Heart left ventricle (tissue), 16 donors: ENCODE measurements at regions of chr1 and their contacts with region 1.

Region 1: DNA sequence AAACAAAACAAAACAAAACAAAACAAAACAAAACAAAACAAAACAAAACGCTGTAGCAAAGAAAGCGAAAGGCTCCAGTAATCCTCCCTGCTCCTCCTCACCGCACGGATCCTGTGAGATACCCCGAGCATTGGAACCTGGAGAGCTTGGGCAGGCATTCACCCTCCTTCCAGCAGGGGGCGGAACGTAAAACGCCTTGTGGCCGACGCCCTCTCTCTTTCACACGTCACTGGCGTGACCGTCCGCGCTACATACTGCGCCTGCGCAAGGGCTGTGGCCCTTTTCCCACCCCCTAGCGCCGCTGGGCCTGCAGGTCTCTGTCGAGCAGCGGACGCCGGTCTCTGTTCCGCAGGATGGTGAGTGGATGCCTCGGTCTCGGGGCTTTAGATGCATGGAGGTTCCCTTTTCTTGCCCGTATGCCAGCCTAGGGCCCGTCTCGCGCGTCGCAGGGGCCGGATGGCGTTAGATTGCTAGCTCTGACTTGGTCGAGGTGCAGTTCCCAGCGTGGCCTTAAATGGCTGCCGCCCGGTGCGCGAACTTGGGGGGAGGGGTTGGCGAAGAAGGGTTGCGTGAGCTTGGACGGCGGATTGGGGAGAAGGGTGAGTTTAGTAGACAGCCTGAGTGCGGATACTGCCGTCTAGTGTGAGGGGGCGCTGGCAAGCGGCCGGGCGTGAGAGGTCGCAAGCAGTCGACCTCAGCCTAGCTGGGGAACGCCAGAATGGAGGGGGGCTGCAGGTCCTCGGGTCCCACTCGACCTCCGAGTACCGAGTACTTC is at the start of gene RPL5:
- DNase-seq: peak; percentile 95 to 99 (median 98)
- ATAC-seq: peak; percentile 96 to 98 (median 96)
- H3K4me3 ChIP-seq: peak within 1 kb of the TSS; percentile 65 to 98 (median 77)
- H3K27ac ChIP-seq: peak within 1 kb of the TSS; percentile 81 to 95 (median 88)
- H3K4me1 ChIP-seq: peaks cover 7 to 42% (median 28%) of the 10 kb centered on the region in 12 donors
- H3K27me3 ChIP-seq: no peaks in the 10 kb centered on the region
- CTCF ChIP-seq: peak; percentile 91 to 99 (median 94)
- POLR2A ChIP-seq: peak in 1 of 2 donors; percentile 93
- total RNA-seq, gene RPL5: 463 to 779 (median 580) TPM

Region 2: DNA sequence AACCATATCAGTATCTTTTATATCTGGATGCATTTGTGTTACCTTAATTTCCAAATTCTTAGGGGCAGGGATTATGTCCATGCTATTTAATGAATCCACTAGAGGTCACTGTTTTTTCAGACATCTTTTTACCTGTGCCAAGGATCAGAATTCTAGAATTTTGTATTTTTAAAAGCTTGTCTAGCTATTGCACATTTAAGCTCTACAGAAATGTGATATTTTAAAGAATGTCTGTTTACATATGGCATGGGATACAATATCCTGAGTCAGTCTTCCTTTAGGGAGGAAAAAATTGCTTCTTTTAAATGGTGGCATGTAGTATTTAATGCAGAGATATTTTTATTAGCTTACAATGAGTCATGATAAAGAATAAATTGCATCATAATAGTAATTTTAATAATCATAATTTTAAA is 521.8 kb before region 1 on chr1:
- intact Hi-C with region 1: loop called in 2 of 10 experiments (anchors 5 to 10 kb)
- DNase-seq: no peak
- ATAC-seq: peak in 1 of 4 donors; percentile 49
- H3K4me3 ChIP-seq: no peak overlapping the region
- H3K27ac ChIP-seq: no peak overlapping the region
- H3K4me1 ChIP-seq: no peaks in the 10 kb centered on the region
- H3K27me3 ChIP-seq: no peaks in the 10 kb centered on the region
- CTCF ChIP-seq: peak; percentile 37 to 73 (median 54)
- POLR2A ChIP-seq: no peak

Region 3: GRCh38 chr1:92749024-92749634 is 82.8 kb before region 1 on chr1:
- intact Hi-C with region 1: loop called in 1 of 10 experiments (anchors 5 kb)
- DNase-seq: peak in 1 of 5 donors; percentile 16
- ATAC-seq: peak in 3 of 4 donors; percentile 54 to 59 (median 55)
- H3K4me3 ChIP-seq: no peak overlapping the region
- H3K27ac ChIP-seq: no peak overlapping the region
- H3K4me1 ChIP-seq: peaks cover 0 to 25% (median 7%) of the 10 kb centered on the region in 12 donors
- H3K27me3 ChIP-seq: no peaks in the 10 kb centered on the region
- CTCF ChIP-seq: peak; percentile 34 to 72 (median 54)
- POLR2A ChIP-seq: no peak

Region 4: GRCh38 chr1:92784639-92785500 is 47.1 kb before region 1 on chr1 and contains the start of gene EVI5:
- intact Hi-C with region 1: loop called in 4 of 10 experiments (anchors 2 to 5 kb)
- DNase-seq: peak; percentile 94 to 97 (median 96)
- ATAC-seq: peak; percentile 97 to 98 (median 97)
- H3K4me3 ChIP-seq: peak within 1 kb of the TSS; percentile 64 to 95 (median 81)
- H3K27ac ChIP-seq: peak within 1 kb of the TSS; percentile 94 to 99 (median 97)
- H3K4me1 ChIP-seq: peaks cover 0 to 39% (median 20%) of the 10 kb centered on the region in 12 donors
- H3K27me3 ChIP-seq: peaks cover 0 to 3% (median 0%) of the 10 kb centered on the region in 9 donors
- CTCF ChIP-seq: peak in 4 of 12 donors; percentile 18 to 51 (median 30)
- POLR2A ChIP-seq: peak in 1 of 2 donors; percentile 73
- total RNA-seq, gene EVI5: 16.7 to 34.6 (median 27.3) TPM

Region 5: DNA sequence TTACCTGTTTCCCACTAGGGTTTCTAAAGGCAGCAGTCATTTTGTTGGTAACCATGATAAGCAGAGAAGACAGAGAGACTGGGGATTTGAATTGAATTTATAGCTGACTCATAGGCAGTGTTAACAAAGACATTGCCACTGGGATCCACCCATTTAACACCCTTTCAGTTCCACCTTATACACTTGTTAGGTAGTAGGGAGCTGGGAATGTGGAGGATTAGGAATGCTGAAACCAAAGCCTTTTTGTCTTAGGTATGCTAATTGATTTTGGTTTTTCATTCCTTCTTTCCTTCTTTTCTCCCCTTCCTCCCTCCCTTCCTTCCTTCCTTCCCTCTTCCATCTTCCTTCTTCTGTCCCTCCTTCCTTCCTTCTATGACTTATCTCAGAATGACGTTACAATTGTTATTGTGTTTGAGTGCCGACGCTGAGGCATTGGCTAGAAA is 39.6 kb before region 1 on chr1:
- intact Hi-C with region 1: loop called in 2 of 10 experiments (anchors 5 kb)
- DNase-seq: no peak
- ATAC-seq: peak in 2 of 4 donors; percentile 38 to 54
- H3K4me3 ChIP-seq: peak overlapping the region in 2 of 12 donors; percentile 25 to 41
- H3K27ac ChIP-seq: peak overlapping the region in 8 of 12 donors; percentile 0 to 66 (median 31)
- H3K4me1 ChIP-seq: peaks cover 0 to 18% (median 0%) of the 10 kb centered on the region in 12 donors
- H3K27me3 ChIP-seq: no peaks in the 10 kb centered on the region
- CTCF ChIP-seq: no peak
- POLR2A ChIP-seq: no peak